Activated T-helper 1 cell treated with anti-CD3 and anti-CD28 coated beads, Interleukin-12 subunit alpha, Interleukin-12 subunit beta, Interleukin-2, Interleukin-4 antibody, amounts not matched to agents 30 ng/mL and 10 ng/mL and 1 ng/mL, durations not matched to agents 14 hours and 24 hours and 36 hours (primary cell): ENCODE measurements at regions of chr11 and their contacts with region 1.

Region 1: DNA sequence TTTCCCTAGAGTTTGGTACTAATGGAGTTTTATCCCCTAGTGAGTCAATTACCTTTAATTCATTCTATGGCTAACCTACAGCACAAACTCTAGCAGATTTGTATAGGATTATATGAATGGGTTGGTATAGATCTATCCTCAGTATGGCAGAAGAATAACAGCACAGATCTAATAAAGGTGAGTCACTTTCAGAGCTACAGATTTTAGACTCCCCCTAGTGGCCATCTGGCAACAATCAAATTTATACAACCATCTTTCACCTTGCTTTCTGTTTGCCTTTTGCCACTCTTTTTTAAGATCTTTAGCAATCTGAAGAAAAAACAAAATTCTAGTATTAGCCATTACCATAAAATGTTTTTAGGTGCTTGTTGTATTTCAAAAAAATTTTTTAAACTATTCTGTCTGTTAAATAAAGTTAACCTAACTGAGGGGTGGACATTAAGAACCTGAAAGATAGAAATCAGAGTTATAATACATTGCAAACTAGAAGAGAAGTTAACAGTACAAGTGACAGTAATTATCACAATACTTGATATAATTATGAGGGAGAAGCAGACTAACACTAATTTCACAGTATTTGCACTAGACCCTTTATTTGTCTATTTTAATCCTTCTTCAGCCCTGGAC is 25.8 kb downstream of the DDIAS start:
- DNase-seq: no peak
- H3K4me3 Mint-ChIP-seq: no peak overlapping the region
- H3K27ac Mint-ChIP-seq: no peak overlapping the region
- H3K4me1 Mint-ChIP-seq: peaks cover 19% of the 10 kb centered on the region
- H3K27me3 Mint-ChIP-seq: no peaks in the 10 kb centered on the region

Region 2: GRCh38 chr11:82906244-82906654 is 21.1 kb before region 1 on chr11:
- intact Hi-C with region 1: loop called (anchors 1 kb)
- DNase-seq: no peak
- H3K4me3 Mint-ChIP-seq: no peak overlapping the region
- H3K27ac Mint-ChIP-seq: no peak overlapping the region
- H3K4me1 Mint-ChIP-seq: peaks cover 56% of the 10 kb centered on the region
- H3K27me3 Mint-ChIP-seq: no peaks in the 10 kb centered on the region